GM12878 (cell line): ENCODE measurements at regions of chr11 and their contacts with region 1.

Region 1: DNA sequence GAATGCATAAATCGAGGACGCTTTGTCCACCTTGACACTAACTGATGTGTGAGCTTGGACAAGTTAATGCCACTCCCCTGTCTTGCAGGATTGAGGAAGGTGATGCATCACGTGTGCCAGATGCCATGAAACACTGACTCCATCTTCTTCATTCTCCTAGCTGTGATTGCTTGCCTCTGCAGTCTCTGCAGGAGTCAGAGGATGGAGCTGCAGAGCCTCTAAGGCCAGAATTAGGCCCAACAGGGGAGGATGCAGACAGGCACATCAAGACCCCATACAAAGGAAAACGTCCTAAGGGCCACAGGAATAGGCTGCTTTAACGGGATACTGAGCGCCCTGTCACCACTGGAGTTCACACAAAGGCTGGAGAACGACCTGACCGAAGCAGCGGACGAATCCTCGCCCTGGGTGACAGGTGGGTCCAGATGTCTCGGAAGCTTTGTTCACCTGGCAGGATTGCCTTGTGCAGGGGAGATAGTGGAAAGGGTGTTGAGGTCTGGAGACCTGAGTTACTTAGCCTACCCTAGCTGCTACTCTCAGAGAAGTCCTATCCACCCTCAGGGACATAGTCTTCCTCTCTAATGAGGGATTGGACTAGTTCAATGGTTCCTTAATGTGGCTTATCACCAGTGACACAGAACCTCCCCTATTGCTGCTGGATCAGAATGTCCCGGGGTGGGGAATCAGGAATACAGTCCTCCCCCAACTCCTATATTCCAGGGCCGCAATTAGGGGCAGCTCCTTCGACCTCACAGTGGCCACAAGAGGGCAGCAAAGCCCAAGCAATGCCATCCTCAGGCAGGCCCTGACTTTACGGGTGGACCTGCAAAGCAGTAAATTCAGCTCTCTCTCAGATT is 32.4 kb downstream of the DBX1 start:
- DNase-seq: no peak
- ATAC-seq: peak; percentile 94
- H3K4me3 ChIP-seq: no peak overlapping the region
- H3K27ac ChIP-seq: no peak overlapping the region
- H3K4me1 ChIP-seq: no peaks in the 10 kb centered on the region
- H3K27me3 ChIP-seq: peaks cover 1 to 7% of the 10 kb centered on the region in 2 experiments; a peak in 3 of 4 replicates
- CTCF ChIP-seq: peak; percentile 84 to 96 (median 87); a peak in 5 of 6 replicates
- EP300 ChIP-seq: no peak
- POLR2A ChIP-seq: no peak
- RAD21 ChIP-seq: peak; percentile 98

Region 2: DNA sequence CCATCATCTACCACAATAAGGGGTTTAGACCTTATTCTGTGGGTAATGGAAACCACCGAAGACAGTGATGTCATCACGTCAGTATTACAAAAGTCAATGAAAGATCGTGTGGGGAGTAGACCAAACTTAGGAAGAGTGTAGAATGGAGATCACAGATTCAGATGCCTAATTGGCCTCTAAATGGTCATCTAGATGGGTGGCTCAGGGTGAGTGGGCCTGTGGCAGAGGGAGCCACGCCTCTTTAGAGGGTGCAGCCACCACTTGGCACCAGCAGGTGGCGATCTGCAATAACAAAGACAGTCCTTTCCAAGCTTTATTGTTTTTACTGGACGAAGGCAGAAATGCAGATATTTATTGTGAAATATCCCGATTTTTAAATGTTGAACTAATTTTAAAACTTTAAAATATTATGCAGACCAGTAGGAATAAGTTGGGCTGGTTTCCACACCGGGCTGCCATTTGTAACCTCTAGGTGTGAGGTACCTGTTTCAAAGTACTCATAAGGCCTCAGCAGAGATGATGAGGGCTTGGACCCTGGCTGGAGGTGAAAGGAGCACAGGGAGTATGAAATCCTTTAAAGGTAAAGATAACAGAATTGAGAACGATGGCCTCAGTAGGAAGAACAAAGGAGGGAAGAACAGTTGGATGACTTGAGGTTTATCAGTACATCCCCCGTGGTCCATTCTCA is 189.6 kb before region 1 on chr11:
- CTCF ChIA-PET with region 1: interaction called, 28 read pairs
- POLR2A ChIA-PET with region 1: no interaction called
- RAD21 ChIA-PET with region 1: interaction called, 5 read pairs
- SMC1A ChIA-PET with region 1: interaction called, 8 read pairs
- in situ Hi-C with region 1: no loop called
- intact Hi-C with region 1: loop called (anchors 1 kb)
- DNase-seq: no peak
- ATAC-seq: peak; percentile 87
- H3K4me3 ChIP-seq: no peak overlapping the region
- H3K27ac ChIP-seq: no peak overlapping the region
- H3K4me1 ChIP-seq: peaks cover 4% of the 10 kb centered on the region; the same call in 1 of the 2 replicates
- H3K27me3 ChIP-seq: no peaks in the 10 kb centered on the region
- CTCF ChIP-seq: peak; percentile 64 to 93 (median 83)
- EP300 ChIP-seq: no peak
- POLR2A ChIP-seq: no peak
- RAD21 ChIP-seq: peak; percentile 53

Region 3: GRCh38 chr11:20110908-20111669 is 16.8 kb before region 1 on chr11:
- CTCF ChIA-PET with region 1: interaction called, 19 read pairs
- POLR2A ChIA-PET with region 1: no interaction called
- RAD21 ChIA-PET with region 1: interaction called, 3 read pairs
- SMC1A ChIA-PET with region 1: interaction called, 3 read pairs
- in situ Hi-C with region 1: no loop called
- intact Hi-C with region 1: no loop called
- DNase-seq: peak; percentile 8
- ATAC-seq: peak; percentile 97
- H3K4me3 ChIP-seq: no peak overlapping the region
- H3K27ac ChIP-seq: no peak overlapping the region
- H3K4me1 ChIP-seq: no peaks in the 10 kb centered on the region; the same call in 1 of the 2 replicates
- H3K27me3 ChIP-seq: no peaks in the 10 kb centered on the region
- CTCF ChIP-seq: peak; percentile 90 to 94 (median 94); a peak in 5 of 6 replicates
- EP300 ChIP-seq: no peak
- POLR2A ChIP-seq: no peak
- RAD21 ChIP-seq: peak; percentile 83

Region 4: DNA sequence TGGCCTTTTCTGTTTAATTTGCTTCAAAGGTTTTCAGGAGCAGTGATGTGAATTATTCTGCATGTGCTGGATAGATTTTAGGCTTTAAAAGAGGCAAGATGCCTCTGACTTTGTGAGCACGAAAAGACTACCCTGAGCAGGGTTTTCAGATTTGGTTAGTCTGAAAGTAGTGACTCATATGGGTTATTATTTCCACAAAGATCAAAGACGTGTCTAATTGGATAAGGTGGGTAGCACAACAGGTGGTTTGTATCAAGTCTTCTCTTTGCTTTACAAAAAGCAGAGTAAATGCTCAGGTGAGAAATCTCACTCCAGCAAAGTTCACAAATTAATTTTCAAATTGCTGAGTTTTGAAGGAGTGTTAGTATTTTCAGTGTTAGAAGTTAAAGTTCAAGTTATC is 70.0 kb after region 1 on chr11:
- CTCF ChIA-PET with region 1: interaction called, 6 read pairs
- POLR2A ChIA-PET with region 1: no interaction called
- RAD21 ChIA-PET with region 1: interaction called, 3 read pairs
- SMC1A ChIA-PET with region 1: no interaction called
- in situ Hi-C with region 1: no loop called
- intact Hi-C with region 1: loop called (anchors 10 kb)
- DNase-seq: peak; percentile 40
- ATAC-seq: peak; percentile 96
- H3K4me3 ChIP-seq: no peak overlapping the region
- H3K27ac ChIP-seq: no peak overlapping the region
- H3K4me1 ChIP-seq: no peaks in the 10 kb centered on the region; the same call in 1 of the 2 replicates
- H3K27me3 ChIP-seq: no peaks in the 10 kb centered on the region
- CTCF ChIP-seq: no peak
- EP300 ChIP-seq: peak; percentile 22 to 73; a peak in 2 of 4 replicates
- POLR2A ChIP-seq: no peak
- RAD21 ChIP-seq: no peak

Region 5: DNA sequence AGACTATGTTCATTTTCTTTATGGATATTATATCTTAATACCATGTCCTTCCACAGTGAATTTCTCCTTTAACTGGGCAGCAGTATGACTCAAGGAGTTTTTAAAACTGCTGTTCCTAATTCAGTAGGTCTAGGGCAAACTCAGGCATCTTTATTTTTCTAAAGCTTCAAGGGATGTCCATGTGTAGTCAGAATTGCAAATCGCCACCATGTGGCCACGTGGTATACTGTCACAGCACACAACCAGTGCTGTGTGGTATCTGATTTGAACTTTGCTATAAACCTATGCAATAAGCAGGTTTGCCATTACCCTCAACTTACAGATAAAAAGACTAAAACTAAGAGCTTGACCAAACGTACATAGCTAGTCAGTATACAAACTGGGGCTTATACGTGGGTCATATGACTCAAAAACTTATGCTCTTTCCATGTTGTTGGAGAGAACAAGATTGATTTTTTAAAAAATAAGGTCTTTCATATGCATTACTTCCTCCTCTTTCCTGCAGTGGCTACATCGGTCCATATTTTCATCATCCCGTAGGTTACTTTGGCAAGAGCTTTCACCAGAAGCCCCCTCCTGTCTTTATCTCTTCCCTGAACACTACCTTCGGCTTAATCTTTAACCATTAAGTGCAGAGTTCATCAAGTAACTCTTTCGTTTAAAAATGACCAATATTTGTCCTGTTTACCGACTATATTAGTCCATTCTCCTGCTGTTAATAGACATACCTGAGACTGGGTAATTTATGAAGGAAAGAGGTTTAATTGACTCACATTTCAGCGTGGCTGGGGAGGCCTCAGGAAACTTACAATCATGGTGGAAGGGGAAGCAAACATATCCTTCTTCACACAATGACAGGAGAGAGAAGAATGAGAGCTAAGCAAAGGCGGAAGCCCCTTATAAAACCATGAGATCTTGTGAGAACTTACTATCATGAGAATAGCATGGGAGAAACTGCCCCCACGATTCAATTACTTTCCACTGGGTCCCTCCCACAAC is 227.6 kb after region 1 on chr11:
- CTCF ChIA-PET with region 1: interaction called, 131 read pairs
- POLR2A ChIA-PET with region 1: no interaction called
- RAD21 ChIA-PET with region 1: interaction called, 46 read pairs
- SMC1A ChIA-PET with region 1: interaction called, 56 read pairs
- in situ Hi-C with region 1: loop called (anchors 5 kb)
- intact Hi-C with region 1: loop called (anchors 1 kb)
- DNase-seq: no peak
- ATAC-seq: peak; percentile 95
- H3K4me3 ChIP-seq: no peak overlapping the region
- H3K27ac ChIP-seq: no peak overlapping the region
- H3K4me1 ChIP-seq: no peaks in the 10 kb centered on the region
- H3K27me3 ChIP-seq: no peaks in the 10 kb centered on the region
- CTCF ChIP-seq: peak; percentile 45 to 57 (median 50)
- EP300 ChIP-seq: no peak
- POLR2A ChIP-seq: no peak
- RAD21 ChIP-seq: peak; percentile 27; the same call in 1 of the 2 replicates

Region 6: DNA sequence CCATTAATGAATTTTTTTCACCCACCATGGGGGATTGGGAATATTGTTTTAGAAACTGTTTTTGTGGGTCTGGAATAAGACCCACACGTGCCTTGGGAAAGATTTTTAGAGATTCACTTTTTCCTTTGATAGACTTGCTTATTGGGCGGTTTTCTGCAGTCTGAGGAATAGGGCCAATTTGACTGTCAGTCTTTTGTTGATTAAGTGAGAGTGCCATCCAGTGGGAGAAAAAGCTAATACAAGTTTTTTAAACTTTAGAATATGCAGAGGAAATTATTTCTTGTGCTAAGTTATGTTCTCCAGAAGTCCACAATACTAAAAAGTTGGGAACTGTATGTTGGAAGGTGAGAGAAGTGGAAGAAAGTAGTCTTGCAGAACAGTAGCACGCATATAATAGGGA is 315.7 kb after region 1 on chr11:
- CTCF ChIA-PET with region 1: interaction called, 6 read pairs
- POLR2A ChIA-PET with region 1: no interaction called
- RAD21 ChIA-PET with region 1: interaction called, 3 read pairs
- SMC1A ChIA-PET with region 1: no interaction called
- in situ Hi-C with region 1: no loop called
- intact Hi-C with region 1: loop called (anchors 10 kb)
- DNase-seq: no peak
- ATAC-seq: peak; percentile 54; the same call in 1 of the 3 replicates
- H3K4me3 ChIP-seq: no peak overlapping the region
- H3K27ac ChIP-seq: no peak overlapping the region
- H3K4me1 ChIP-seq: no peaks in the 10 kb centered on the region
- H3K27me3 ChIP-seq: no peaks in the 10 kb centered on the region
- CTCF ChIP-seq: peak in 2 of 3 experiments; percentile 33 to 41; a peak in 3 of 6 replicates
- EP300 ChIP-seq: no peak
- POLR2A ChIP-seq: no peak
- RAD21 ChIP-seq: peak; percentile 42; the same call in 1 of the 2 replicates

Region 7: DNA sequence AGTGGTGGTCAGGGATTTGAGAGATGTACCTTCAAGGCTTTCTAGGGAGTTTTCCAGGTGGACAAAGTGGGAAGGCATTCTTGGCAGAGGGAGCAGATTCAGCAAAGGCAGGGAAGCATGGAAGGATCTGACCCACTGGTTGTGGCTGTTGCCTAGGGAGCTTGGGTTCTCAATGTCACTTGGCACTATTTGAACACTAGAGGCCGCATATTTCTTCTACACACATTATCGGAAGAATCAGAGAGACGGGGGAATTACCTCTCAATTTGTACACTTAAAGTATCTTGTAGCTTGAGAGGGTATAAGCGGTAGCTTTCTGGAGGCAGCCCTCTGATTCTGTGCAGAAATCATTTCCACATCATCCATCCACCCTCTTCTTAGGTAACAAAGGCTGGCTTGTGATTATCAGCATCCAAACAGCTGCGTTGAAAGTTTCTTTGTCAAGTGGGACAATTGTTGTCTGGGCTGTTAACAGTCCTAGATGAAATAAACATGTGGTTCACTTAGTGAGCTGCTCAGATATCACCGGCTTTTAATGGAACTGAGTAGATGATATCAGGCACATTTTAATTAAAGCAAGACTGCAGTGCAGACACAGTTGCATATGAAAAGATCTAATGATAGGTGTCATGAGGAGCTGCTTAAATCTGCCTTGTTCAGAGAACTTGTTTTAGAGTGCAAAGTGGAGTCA is 544.1 kb after region 1 on chr11:
- CTCF ChIA-PET with region 1: interaction called, 3 read pairs
- POLR2A ChIA-PET with region 1: no interaction called
- RAD21 ChIA-PET with region 1: no interaction called
- SMC1A ChIA-PET with region 1: no interaction called
- in situ Hi-C with region 1: no loop called
- intact Hi-C with region 1: loop called (anchors 5 kb)
- DNase-seq: no peak
- ATAC-seq: peak; percentile 84
- H3K4me3 ChIP-seq: no peak overlapping the region
- H3K27ac ChIP-seq: no peak overlapping the region
- H3K4me1 ChIP-seq: no peaks in the 10 kb centered on the region
- H3K27me3 ChIP-seq: peaks cover 10 to 13% of the 10 kb centered on the region in 2 experiments
- CTCF ChIP-seq: peak in 2 of 3 experiments; percentile 22 to 30; a peak in 3 of 6 replicates
- EP300 ChIP-seq: no peak
- POLR2A ChIP-seq: no peak
- RAD21 ChIP-seq: no peak